CD4-positive, alpha-beta memory T cell (primary cell): ENCODE measurements at regions of chr18 and their contacts with region 1.

Region 1: GRCh38 chr18:2948038-2948437 is 64.9 kb downstream of the LPIN2 start:
- DNase-seq: no peak
- H3K4me3 ChIP-seq: no peak overlapping the region
- H3K4me3 Mint-ChIP-seq: no peak overlapping the region
- H3K27ac ChIP-seq: no peak overlapping the region
- H3K27ac Mint-ChIP-seq: peak overlapping the region in 2 of 7 donors; percentile 41 to 57
- H3K4me1 ChIP-seq: peaks cover 39% of the 10 kb centered on the region
- H3K4me1 Mint-ChIP-seq: peaks cover 33 to 66% (median 51%) of the 10 kb centered on the region in 4 donors
- H3K27me3 ChIP-seq: no peaks in the 10 kb centered on the region
- H3K27me3 Mint-ChIP-seq: no peaks in the 10 kb centered on the region

Region 2: DNA sequence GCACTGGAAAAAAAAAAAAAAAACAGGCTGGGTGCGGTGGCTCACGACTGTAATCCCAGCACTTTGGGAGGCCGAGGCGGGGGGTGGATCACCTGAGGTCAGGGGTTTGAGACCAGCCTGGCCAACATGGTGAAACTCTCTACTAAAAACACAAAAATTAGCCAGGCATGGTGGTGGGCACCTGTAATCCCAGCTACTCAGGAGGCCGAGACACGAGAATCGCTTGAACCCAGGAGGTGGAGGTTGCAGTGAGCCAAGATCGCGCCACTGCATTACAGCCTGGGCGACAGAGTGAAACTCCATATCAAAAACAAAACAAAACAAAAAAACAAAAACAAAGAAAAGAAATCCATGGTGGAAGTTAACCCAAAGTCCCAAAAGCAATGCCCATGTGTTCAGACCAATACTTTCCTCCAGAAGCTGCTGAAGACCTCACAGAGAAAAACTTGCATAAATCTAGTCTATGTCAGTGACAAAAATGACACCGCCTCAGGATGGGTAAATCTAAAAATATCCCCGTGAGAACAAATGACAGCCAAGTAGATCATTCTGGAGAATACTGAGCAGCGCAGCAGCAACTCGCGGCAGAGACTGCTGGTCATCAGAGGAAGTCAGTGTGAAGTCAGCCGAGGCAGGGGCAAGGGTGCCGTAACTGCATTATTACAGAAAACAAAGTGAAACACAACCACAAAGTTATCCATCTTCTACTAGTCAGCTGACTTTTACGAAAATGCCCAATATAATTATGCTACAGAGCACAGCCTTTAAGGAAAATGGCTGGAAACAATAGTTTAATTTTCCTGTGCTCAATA is 23.9 kb after region 1 on chr18:
- CTCF ChIA-PET with region 1: interaction called, 28 read pairs
- POLR2A ChIA-PET with region 1: interaction called, 1,352 read pairs
- intact Hi-C with region 1: no loop called
- DNase-seq: peak; percentile 66 to 91 (median 72)
- H3K4me3 ChIP-seq: peak overlapping the region; percentile 34 to 37
- H3K4me3 Mint-ChIP-seq: peak overlapping the region; percentile 82 to 94 (median 88)
- H3K27ac ChIP-seq: peak overlapping the region; percentile 79
- H3K27ac Mint-ChIP-seq: peak overlapping the region; percentile 88 to 98 (median 96)
- H3K4me1 ChIP-seq: peaks cover 100% of the 10 kb centered on the region
- H3K4me1 Mint-ChIP-seq: peaks cover 72 to 96% (median 86%) of the 10 kb centered on the region in 4 donors
- H3K27me3 ChIP-seq: no peaks in the 10 kb centered on the region
- H3K27me3 Mint-ChIP-seq: no peaks in the 10 kb centered on the region

Region 3: GRCh38 chr18:2978646-2979045 is 30.6 kb after region 1 on chr18:
- CTCF ChIA-PET with region 1: interaction called, 28 read pairs
- POLR2A ChIA-PET with region 1: interaction called, 1,352 read pairs
- intact Hi-C with region 1: no loop called
- DNase-seq: peak in 1 of 5 donors; percentile 74
- H3K4me3 ChIP-seq: peak overlapping the region; percentile 8 to 31
- H3K4me3 Mint-ChIP-seq: peak overlapping the region; percentile 75 to 96 (median 90)
- H3K27ac ChIP-seq: peak overlapping the region; percentile 72
- H3K27ac Mint-ChIP-seq: peak overlapping the region; percentile 89 to 96 (median 93)
- H3K4me1 ChIP-seq: peaks cover 90% of the 10 kb centered on the region
- H3K4me1 Mint-ChIP-seq: peaks cover 55 to 93% (median 68%) of the 10 kb centered on the region in 4 donors
- H3K27me3 ChIP-seq: no peaks in the 10 kb centered on the region
- H3K27me3 Mint-ChIP-seq: no peaks in the 10 kb centered on the region